GM10248 (cell line): ENCODE measurements at regions of chr22 and their contacts with region 1.

Region 1: GRCh38 chr22:44684506-44685383 is 17.3 kb upstream of the PRR5 start:
- DNase-seq: peak; percentile 87
- CTCF ChIP-seq: peak; percentile 94

Region 2: GRCh38 chr22:44697423-44698141 is 12.8 kb after region 1 on chr22:
- CTCF ChIA-PET with region 1: interaction called, 39 read pairs
- POLR2A ChIA-PET with region 1: no interaction called
- DNase-seq: peak; percentile 86
- CTCF ChIP-seq: peak; percentile 91

Region 3: GRCh38 chr22:44729391-44730021 is 44.8 kb after region 1 on chr22:
- CTCF ChIA-PET with region 1: interaction called, 13 read pairs
- POLR2A ChIA-PET with region 1: no interaction called
- DNase-seq: no peak
- CTCF ChIP-seq: no peak

Region 4: GRCh38 chr22:44735540-44736488 is 51.1 kb after region 1 on chr22:
- CTCF ChIA-PET with region 1: interaction called, 13 read pairs
- POLR2A ChIA-PET with region 1: no interaction called
- DNase-seq: peak; percentile 89
- CTCF ChIP-seq: peak; percentile 99

Region 5: DNA sequence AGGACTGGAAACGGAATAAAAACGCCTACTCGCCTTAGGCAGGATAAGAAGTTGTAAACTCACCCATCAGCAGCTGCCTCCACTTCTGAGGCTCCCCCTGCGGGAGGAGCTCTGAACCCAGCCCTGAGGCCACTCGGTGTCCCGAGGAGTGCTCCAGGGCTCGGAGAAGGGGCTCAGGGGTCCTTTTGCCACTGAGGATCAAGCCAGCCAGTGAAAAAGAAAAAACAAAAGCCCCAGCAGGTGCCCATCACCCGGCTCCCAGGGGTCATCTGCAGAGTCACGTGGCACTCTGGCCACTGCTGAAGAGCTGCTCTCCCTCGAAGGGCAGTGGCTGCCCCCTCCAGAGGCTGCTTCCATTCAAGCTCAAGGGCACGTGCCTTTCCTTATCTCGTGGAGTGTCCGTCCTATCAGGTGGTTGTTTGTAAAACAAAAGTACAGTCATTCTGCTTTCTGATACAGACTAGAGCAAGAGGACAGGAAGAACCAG is 508.0 kb after region 1 on chr22:
- CTCF ChIA-PET with region 1: no interaction called
- POLR2A ChIA-PET with region 1: interaction called, 10 read pairs
- DNase-seq: peak; percentile 19
- CTCF ChIP-seq: no peak